Gastrocnemius medialis (tissue), 4 donors: ENCODE measurements at regions of chr2 and their contacts with region 1.

Region 1: DNA sequence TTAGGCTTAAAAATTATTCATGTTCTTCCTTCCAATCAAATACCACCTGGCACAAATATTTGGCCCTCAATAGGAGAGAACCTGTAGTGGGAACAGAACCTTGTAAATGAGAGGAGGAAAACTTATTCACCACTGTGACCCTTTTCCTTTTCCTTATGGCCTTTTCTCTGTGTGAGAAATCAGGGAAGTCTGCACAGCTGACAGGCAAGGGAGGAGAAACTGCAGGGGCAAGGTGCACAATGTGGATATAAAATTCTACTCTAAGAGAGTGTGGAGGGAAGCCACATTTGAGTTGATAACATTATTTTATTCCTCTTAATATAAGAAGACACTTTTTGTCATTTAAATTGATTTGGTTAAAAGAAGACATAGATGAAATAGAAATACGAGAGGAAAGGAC is 1247.0 kb upstream of the CHAC2 start:
- DNase-seq: no peak
- ATAC-seq: no peak
- H3K4me3 ChIP-seq: no peak overlapping the region
- H3K27ac ChIP-seq: no peak overlapping the region
- H3K4me1 ChIP-seq: no peaks in the 10 kb centered on the region
- H3K27me3 ChIP-seq: no peaks in the 10 kb centered on the region
- CTCF ChIP-seq: no peak
- POLR2A ChIP-seq: no peak

Region 2: DNA sequence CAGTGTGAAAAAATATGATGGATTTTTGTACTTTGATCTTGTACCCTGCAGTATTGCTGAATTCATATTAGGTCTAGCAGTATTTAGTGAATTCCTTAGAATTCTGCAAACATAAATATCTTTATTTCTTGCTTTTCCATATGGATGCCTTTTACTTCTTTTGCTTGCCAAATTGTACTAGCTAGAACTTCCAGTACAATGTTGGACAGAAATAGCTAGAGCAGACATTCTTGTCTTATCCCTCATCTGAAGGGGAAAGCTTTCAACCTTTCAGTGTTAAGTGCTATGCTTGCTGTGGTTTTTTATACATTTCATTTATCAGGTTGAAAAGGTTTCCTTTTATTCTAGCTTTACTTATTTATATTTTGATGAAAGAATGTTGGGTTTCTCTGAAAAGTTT is 75.0 kb before region 1 on chr2:
- in situ Hi-C with region 1: no loop called
- intact Hi-C with region 1: no loop called
- DNase-seq: no peak
- ATAC-seq: no peak
- H3K4me3 ChIP-seq: no peak overlapping the region
- H3K27ac ChIP-seq: no peak overlapping the region
- H3K4me1 ChIP-seq: no peaks in the 10 kb centered on the region
- H3K27me3 ChIP-seq: no peaks in the 10 kb centered on the region
- CTCF ChIP-seq: no peak
- POLR2A ChIP-seq: no peak

Region 3: GRCh38 chr2:52558265-52558664 is 37.6 kb after region 1 on chr2:
- in situ Hi-C with region 1: loop called in 2 of 4 experiments (anchors 5 to 10 kb)
- intact Hi-C with region 1: no loop called
- DNase-seq: no peak
- ATAC-seq: no peak
- H3K4me3 ChIP-seq: no peak overlapping the region
- H3K27ac ChIP-seq: no peak overlapping the region
- H3K4me1 ChIP-seq: no peaks in the 10 kb centered on the region
- H3K27me3 ChIP-seq: no peaks in the 10 kb centered on the region
- CTCF ChIP-seq: no peak
- POLR2A ChIP-seq: no peak